ENCODE measurements at regions of chr10 and their contacts with region 1.

Region 1: DNA sequence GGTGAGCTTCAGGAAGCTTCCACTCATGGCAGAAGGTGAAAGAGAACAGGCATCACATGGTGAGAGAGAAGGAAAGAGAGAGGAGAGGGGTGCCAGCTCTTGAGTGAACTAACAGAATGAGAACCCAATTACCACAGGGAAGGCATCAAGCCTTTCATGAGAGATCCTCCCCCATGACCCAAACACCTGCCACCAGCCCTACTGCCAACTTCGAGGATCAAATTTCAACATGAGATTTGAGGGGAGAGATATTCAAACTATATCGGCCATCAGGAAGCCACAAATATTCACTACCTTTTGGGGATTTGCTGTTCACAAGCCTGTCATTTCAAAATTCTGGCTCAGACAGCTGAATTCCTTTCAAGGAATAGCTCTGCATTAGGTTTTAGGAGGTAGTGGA is 39.9 kb upstream of the SMNDC1 start:
- DNase-seq: no peak
- ATAC-seq: no peak
- H3K4me3 Mint-ChIP-seq: no peak overlapping the region
- H3K27ac Mint-ChIP-seq: no peak overlapping the region
- H3K4me1 Mint-ChIP-seq: peaks cover 5% of the 10 kb centered on the region
- H3K27me3 Mint-ChIP-seq: peaks cover 2% of the 10 kb centered on the region

Region 2: GRCh38 chr10:110326351-110327032 is 18.1 kb before region 1 on chr10:
- CTCF ChIA-PET with region 1: interaction called, 10 read pairs
- POLR2A ChIA-PET with region 1: no interaction called
- intact Hi-C with region 1: no loop called
- DNase-seq: no peak
- ATAC-seq: peak; percentile 38
- H3K4me3 Mint-ChIP-seq: no peak overlapping the region
- H3K27ac Mint-ChIP-seq: peak overlapping the region; percentile 63
- H3K4me1 Mint-ChIP-seq: peaks cover 42% of the 10 kb centered on the region
- H3K27me3 Mint-ChIP-seq: peaks cover 4% of the 10 kb centered on the region

Region 3: GRCh38 chr10:110363572-110364411 is 19.2 kb after region 1 on chr10:
- CTCF ChIA-PET with region 1: no interaction called
- POLR2A ChIA-PET with region 1: no interaction called
- intact Hi-C with region 1: no loop called
- DNase-seq: peak; percentile 69
- ATAC-seq: peak; percentile 8
- H3K4me3 Mint-ChIP-seq: peak overlapping the region; percentile 69
- H3K27ac Mint-ChIP-seq: peak overlapping the region; percentile 95
- H3K4me1 Mint-ChIP-seq: peaks cover 82% of the 10 kb centered on the region
- H3K27me3 Mint-ChIP-seq: no peaks in the 10 kb centered on the region

Measured in activated CD4-positive, alpha-beta T cell treated with anti-CD3 and anti-CD28 coated beads for 36 hours (primary cell).